IMR-90 (cell line): ENCODE measurements at regions of chr18 and their contacts with region 1.

Region 1: DNA sequence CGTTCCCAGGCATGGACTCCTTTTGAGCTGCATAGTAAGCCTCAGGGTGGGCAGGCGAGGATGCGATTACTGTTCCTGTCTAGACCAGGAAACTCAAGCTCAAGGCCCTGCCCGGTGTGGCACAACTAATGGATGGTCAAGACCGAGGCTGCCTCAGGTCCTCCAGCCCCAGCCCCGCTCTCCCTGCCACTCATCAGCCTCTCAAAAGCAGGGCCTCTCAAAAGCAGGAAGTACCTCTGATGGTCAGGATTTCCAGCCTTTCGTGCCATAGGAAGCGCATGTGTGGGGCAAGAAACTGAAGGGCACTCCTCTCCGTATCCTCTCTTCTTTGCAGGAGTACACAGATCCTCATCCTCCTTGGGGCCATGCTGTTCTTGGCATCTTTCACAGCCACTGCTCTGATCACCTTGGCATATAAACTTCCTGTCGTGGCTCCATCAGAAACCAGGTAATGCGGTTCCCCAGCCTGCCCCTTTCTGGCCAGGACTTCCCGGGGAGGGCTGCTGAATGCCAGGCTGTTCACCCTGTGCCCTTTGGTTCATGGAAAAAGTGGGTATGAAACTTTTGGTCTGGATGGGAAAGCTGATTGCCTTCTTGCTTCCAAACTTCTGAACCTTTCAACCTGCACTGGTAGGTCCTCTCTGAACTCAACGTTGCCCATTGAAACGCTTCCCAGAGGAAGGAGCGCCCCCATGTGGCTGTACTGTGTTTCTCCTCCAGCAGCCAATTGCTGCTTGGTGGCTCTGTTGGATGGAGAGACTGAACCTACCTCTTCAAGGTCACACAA is 82.8 kb upstream of the SEC11C start:
- DNase-seq: peak; percentile 68
- ATAC-seq: peak; percentile 87
- H3K4me3 ChIP-seq: no peak overlapping the region
- H3K27ac ChIP-seq: no peak overlapping the region
- H3K4me1 ChIP-seq: peaks cover 2% of the 10 kb centered on the region; the same call in 1 of the 2 replicates
- H3K27me3 ChIP-seq: no peaks in the 10 kb centered on the region
- CTCF ChIP-seq: peak; percentile 88
- POLR2A ChIP-seq: no peak
- RAD21 ChIP-seq: peak; percentile 96

Region 2: DNA sequence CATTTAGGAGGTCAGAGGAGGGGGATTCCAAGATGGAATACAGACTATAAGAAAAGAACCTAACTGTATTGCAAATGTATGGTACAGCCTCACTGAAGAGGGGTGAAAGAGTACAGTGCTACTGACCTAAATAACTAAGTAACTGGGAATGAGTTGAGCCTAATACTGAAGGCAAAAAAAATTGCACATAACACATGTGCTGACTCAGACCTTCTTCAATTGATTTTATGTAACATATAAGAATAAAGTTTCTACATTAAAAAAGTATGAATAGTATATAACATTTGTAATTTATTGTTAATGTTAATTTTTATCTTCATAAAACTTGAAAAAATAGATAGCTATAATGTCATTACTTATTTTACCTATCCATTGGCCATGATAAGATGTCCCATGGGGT is 344.0 kb before region 1 on chr18:
- CTCF ChIA-PET with region 1: no interaction called
- POLR2A ChIA-PET with region 1: no interaction called
- dilution Hi-C with region 1: no loop called
- in situ Hi-C with region 1: no loop called
- intact Hi-C with region 1: no loop called
- DNase-seq: no peak
- ATAC-seq: no peak
- H3K4me3 ChIP-seq: no peak overlapping the region
- H3K27ac ChIP-seq: no peak overlapping the region
- H3K4me1 ChIP-seq: peaks cover 5% of the 10 kb centered on the region; the same call in 1 of the 2 replicates
- H3K27me3 ChIP-seq: no peaks in the 10 kb centered on the region
- CTCF ChIP-seq: no peak
- POLR2A ChIP-seq: no peak
- RAD21 ChIP-seq: no peak

Region 3: GRCh38 chr18:58851846-58852245 is 205.1 kb before region 1 on chr18:
- CTCF ChIA-PET with region 1: no interaction called
- POLR2A ChIA-PET with region 1: interaction called, 13 read pairs
- dilution Hi-C with region 1: no loop called
- in situ Hi-C with region 1: no loop called
- intact Hi-C with region 1: no loop called
- DNase-seq: no peak
- ATAC-seq: no peak
- H3K4me3 ChIP-seq: no peak overlapping the region
- H3K27ac ChIP-seq: no peak overlapping the region
- H3K4me1 ChIP-seq: no peaks in the 10 kb centered on the region; the same call in 1 of the 2 replicates
- H3K27me3 ChIP-seq: no peaks in the 10 kb centered on the region
- CTCF ChIP-seq: no peak
- POLR2A ChIP-seq: no peak
- RAD21 ChIP-seq: no peak

Region 4: DNA sequence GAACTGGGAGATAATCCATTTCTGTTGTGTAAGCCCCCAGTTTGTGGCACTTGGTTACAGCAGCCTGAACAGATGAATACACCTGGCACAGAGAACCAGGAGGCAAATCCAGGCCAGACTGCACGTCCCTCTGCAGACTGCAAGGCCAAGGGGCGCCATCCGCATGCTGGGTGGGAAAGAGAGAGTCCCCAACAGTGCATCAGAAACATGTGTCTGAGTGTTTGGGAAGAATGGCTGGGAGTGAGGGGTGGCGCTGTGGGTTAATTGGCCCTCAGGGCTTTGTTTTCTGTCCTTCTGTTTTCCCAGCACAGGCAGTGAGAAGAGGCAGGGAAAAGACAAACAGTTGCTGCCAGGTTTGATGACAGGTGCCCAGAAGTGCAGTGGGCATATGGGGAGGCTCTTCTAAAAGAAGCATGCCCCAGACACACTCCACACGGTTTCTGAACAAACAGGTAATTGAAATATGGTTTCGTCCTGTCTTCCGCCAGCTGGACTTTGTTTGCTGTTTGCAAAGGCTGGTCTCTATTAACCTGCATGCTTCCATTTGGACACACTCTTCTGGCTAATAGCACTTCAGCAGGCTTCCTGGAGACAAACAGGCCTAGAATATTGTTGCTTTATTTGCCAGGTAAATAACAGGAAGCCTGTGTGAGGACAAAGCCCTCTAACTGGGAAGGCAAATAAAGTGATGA is 39.3 kb after region 1 on chr18:
- CTCF ChIA-PET with region 1: no interaction called
- POLR2A ChIA-PET with region 1: no interaction called
- dilution Hi-C with region 1: no loop called
- in situ Hi-C with region 1: no loop called
- intact Hi-C with region 1: no loop called
- DNase-seq: no peak
- ATAC-seq: no peak
- H3K4me3 ChIP-seq: no peak overlapping the region
- H3K27ac ChIP-seq: no peak overlapping the region
- H3K4me1 ChIP-seq: no peaks in the 10 kb centered on the region
- H3K27me3 ChIP-seq: peaks cover 69% of the 10 kb centered on the region
- CTCF ChIP-seq: no peak
- POLR2A ChIP-seq: no peak
- RAD21 ChIP-seq: no peak